Activated CD4-positive, alpha-beta T cell treated with anti-CD3 and anti-CD28 coated beads for 36 hours (primary cell): ENCODE measurements at regions of chr10 and their contacts with region 1.

Region 1: DNA sequence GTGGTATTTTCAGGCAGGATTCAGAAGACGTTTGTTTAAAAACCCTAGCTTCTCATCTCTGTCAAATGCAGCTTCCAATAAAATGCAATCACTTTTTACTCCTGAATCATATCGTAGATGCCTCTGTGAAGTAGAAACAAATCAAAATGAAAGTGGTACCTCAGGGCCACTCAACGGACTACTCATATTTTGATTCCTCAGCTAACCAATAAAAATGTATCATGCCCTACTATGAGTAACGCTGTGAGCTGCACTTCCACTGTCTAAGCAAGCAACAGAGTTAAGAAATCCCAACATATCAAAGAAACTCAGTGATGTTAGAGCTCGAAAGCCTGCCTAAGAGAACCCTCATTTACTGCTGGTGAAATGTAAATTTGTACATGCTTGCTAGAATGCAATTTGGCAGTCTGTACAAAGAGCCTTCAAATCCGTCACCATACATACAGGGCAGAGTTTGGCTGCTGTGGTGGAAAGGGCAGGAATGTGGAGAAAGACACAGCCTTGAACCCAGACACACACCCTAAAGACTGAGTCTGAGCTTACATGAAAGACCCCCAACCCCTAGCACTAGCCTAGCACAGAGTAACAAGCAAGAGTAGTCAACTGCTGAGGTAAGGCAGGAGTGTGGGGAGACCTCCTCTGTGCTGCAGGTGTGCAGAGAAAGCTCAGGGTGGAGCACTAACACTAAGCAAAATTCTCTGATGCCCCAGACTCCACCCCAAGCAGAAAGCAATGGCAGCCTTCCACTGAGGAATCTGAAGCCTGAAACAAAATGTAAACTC is 151.5 kb downstream of the ANK3 start:
- DNase-seq: peak; percentile 54
- ATAC-seq: peak; percentile 96
- H3K4me3 Mint-ChIP-seq: peak overlapping the region; percentile 48
- H3K27ac Mint-ChIP-seq: peak overlapping the region; percentile 70
- H3K4me1 Mint-ChIP-seq: peaks cover 33% of the 10 kb centered on the region
- H3K27me3 Mint-ChIP-seq: no peaks in the 10 kb centered on the region

Region 2: GRCh38 chr10:60172363-60172990 is 65.7 kb before region 1 on chr10:
- CTCF ChIA-PET with region 1: no interaction called
- POLR2A ChIA-PET with region 1: no interaction called
- intact Hi-C with region 1: no loop called
- DNase-seq: no peak
- ATAC-seq: no peak
- H3K4me3 Mint-ChIP-seq: no peak overlapping the region
- H3K27ac Mint-ChIP-seq: no peak overlapping the region
- H3K4me1 Mint-ChIP-seq: no peaks in the 10 kb centered on the region
- H3K27me3 Mint-ChIP-seq: no peaks in the 10 kb centered on the region

Region 3: DNA sequence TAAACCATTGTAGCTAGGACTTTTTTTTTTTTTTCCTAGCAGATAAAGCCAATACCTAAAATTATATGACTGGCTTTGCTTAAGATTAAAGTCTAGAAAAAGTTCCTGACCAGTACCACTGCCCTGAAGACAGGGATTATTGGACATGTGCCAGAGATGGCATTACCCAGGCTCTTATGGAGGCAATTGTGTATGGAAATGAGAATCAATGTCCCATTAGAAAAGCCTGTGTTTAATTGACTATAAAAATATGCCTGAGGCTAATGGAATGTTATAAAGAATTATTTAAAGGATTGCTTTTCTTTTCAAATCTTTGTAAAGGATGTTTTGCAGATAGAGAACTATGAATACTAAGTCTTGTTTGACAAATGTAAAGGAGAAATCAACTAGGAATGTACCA is 45.2 kb before region 1 on chr10:
- CTCF ChIA-PET with region 1: no interaction called
- POLR2A ChIA-PET with region 1: interaction called, 10 read pairs
- intact Hi-C with region 1: no loop called
- DNase-seq: no peak
- ATAC-seq: no peak
- H3K4me3 Mint-ChIP-seq: no peak overlapping the region
- H3K27ac Mint-ChIP-seq: no peak overlapping the region
- H3K4me1 Mint-ChIP-seq: no peaks in the 10 kb centered on the region
- H3K27me3 Mint-ChIP-seq: no peaks in the 10 kb centered on the region

Region 4: DNA sequence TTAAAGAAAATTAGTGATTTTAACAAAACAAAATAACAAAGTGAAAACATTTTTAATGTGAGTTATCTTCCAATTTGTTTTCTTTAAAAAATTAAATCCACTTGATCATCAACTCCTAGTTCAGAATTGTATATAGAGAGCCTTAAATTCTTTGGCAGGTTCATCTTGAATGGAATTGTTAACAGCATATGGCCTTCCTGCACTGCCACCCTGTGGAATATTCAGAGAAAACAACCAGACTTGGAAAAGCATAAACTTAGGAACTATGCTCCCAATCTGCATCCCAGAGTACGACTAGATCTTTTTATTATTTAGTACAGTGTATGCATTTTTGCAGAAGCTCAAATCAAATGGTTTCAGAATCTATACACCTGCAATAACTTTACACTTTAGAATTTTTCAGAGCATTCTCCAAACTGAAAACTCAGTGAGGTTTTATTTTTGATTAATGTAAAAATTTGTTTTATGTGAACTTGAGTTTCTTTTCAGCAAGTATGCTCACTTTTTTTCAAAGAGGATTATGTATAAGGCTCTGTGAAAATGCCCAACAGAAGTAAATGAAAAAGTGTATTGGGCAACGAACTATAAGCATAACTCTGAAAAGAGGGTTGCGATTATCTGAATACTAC is 196.4 kb after region 1 on chr10:
- CTCF ChIA-PET with region 1: interaction called, 5 read pairs
- POLR2A ChIA-PET with region 1: no interaction called
- intact Hi-C with region 1: loop called (anchors 1 to 2 kb)
- DNase-seq: peak; percentile 17
- ATAC-seq: no peak
- H3K4me3 Mint-ChIP-seq: no peak overlapping the region
- H3K27ac Mint-ChIP-seq: no peak overlapping the region
- H3K4me1 Mint-ChIP-seq: peaks cover 6% of the 10 kb centered on the region
- H3K27me3 Mint-ChIP-seq: no peaks in the 10 kb centered on the region

Region 5: DNA sequence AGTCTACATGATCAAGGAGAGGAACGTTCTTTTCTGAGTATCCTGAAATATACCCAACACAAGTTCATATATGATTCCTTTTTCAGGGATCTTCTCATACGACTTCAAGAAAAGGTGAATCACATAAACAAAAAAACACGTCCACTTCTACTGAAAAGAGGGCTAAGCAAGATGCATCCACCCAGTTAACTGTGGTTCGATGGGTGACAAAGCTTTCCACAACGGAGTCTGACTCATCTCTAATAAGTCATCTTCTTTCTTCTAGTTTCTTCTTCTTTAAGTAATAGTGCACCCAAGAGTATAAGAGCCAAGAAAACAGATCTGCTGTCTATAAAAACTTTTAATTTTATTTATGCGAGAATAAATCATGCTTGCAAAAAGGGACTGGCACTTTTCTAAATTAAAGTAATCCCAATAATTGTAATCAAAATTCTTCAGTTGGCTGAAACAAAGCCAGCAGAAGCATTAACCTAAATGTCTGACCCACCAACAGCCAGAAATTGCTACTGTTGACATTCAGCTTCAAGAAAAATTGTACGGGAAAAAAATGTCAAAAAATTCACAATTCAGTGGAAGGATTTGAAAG is 298.5 kb after region 1 on chr10:
- CTCF ChIA-PET with region 1: no interaction called
- POLR2A ChIA-PET with region 1: no interaction called
- intact Hi-C with region 1: loop called (anchors 2 to 10 kb)
- DNase-seq: peak; percentile 54
- ATAC-seq: peak; percentile 94
- H3K4me3 Mint-ChIP-seq: peak overlapping the region; percentile 44
- H3K27ac Mint-ChIP-seq: peak overlapping the region; percentile 55
- H3K4me1 Mint-ChIP-seq: peaks cover 57% of the 10 kb centered on the region
- H3K27me3 Mint-ChIP-seq: no peaks in the 10 kb centered on the region

Region 6: GRCh38 chr10:60662917-60663614 is 424.9 kb after region 1 on chr10:
- CTCF ChIA-PET with region 1: no interaction called
- POLR2A ChIA-PET with region 1: no interaction called
- intact Hi-C with region 1: loop called in 1 of 2 experiments (anchors 10 kb)
- DNase-seq: no peak
- ATAC-seq: peak; percentile 49
- H3K4me3 Mint-ChIP-seq: no peak overlapping the region
- H3K27ac Mint-ChIP-seq: peak overlapping the region; percentile 12
- H3K4me1 Mint-ChIP-seq: peaks cover 48% of the 10 kb centered on the region
- H3K27me3 Mint-ChIP-seq: no peaks in the 10 kb centered on the region

Region 7: GRCh38 chr10:60733189-60733822 is 495.1 kb after region 1 on chr10:
- CTCF ChIA-PET with region 1: no interaction called
- POLR2A ChIA-PET with region 1: no interaction called
- intact Hi-C with region 1: loop called in 1 of 2 experiments (anchors 2 kb)
- DNase-seq: peak; percentile 69
- ATAC-seq: peak; percentile 59
- H3K4me3 Mint-ChIP-seq: peak overlapping the region; percentile 90
- H3K27ac Mint-ChIP-seq: no peak overlapping the region
- H3K4me1 Mint-ChIP-seq: peaks cover 32% of the 10 kb centered on the region
- H3K27me3 Mint-ChIP-seq: no peaks in the 10 kb centered on the region

Region 8: DNA sequence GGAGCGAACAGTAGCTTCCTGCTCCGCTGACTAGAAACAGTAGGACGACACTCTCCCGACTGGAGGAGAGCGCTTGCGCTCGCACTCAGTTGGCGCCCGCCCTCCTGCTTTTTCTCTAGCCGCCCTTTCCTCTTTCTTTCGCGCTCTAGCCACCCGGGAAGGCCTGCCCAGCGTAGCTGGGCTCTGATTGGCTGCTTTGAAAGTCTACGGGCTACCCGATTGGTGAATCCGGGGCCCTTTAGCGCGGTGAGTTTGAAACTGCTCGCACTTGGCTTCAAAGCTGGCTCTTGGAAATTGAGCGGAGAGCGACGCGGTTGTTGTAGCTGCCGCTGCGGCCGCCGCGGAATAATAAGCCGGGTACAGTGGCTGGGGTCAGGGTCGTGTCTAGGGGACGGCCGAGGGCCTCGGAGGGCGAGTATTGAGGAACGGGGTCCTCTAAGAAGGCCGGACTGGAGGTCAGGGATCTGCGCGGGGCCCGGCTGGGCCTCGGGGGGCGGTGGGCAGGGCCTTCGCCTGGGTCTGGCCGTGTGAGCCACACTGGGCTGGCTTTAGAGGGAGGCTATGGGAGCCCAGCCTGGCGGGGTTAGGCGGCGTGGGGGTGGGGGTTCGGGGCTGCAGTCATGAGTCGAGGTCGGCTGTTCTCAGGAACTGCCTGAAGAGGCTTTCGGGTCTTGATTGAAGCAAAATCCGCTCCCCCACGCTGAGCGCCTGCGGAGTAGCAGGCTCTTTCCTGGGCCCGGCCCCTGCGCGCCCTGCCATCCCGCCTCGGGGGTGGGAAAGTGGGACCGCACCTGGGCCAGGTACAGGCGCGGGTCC is 540.3 kb after region 1 on chr10 and contains the start of gene CDK1:
- CTCF ChIA-PET with region 1: no interaction called
- POLR2A ChIA-PET with region 1: interaction called, 5 read pairs
- intact Hi-C with region 1: loop called (anchors 10 kb)
- DNase-seq: peak; percentile 98
- ATAC-seq: peak; percentile 99
- H3K4me3 Mint-ChIP-seq: peak within 1 kb of the TSS; percentile 98
- H3K27ac Mint-ChIP-seq: peak within 1 kb of the TSS; percentile 96
- H3K4me1 Mint-ChIP-seq: peaks cover 17% of the 10 kb centered on the region
- H3K27me3 Mint-ChIP-seq: no peaks in the 10 kb centered on the region
- total RNA-seq, gene CDK1: 88.5 to 138 TPM